Sigmoid colon (tissue), 7 donors: ENCODE measurements at regions of chr5 and their contacts with region 1.

Region 1: DNA sequence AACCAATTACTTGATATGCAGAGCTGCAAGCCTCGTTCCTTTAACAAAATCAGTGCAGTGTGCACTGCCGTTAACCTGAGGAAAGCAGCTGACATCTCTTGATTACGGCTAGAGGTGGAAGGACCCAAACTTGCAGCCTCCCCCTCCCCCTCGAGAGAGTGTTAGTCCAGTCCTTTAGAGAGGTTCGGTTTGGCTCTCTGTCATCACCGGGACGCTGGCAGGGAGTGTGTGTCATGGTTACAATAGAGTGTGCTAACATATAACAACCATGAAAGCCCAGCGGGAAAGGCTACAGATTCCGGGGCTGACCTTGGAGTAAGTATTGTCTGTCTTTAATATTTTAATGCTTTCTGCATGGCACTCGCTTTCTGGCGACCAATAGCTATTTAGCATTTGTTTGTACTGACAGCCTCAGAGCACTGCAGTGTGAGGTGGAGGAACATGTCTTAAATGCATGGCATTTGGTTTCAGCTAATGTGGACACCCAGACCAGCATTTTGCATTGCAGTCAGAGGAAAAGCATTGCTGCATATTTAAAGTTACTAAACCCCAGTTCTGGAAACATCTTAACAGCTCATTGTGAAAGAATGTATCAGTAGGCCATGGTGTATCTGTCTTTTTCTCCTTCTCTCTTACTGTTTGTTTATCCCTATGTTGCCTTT is 237.5 kb downstream of the CD180 start:
- DNase-seq: peak; percentile 69
- H3K4me3 ChIP-seq: peak overlapping the region; percentile 23 to 47 (median 46)
- H3K27ac ChIP-seq: peak overlapping the region; percentile 64 to 76 (median 72)
- H3K4me1 ChIP-seq: peaks cover 0 to 26% (median 19%) of the 10 kb centered on the region in 4 donors
- H3K27me3 ChIP-seq: no peaks in the 10 kb centered on the region
- CTCF ChIP-seq: no peak
- EP300 ChIP-seq: no peak
- POLR2A ChIP-seq: no peak

Region 2: GRCh38 chr5:66828548-66829357 is 130.4 kb before region 1 on chr5:
- intact Hi-C with region 1: loop called (anchors 5 kb)
- DNase-seq: peak; percentile 80
- H3K4me3 ChIP-seq: peak overlapping the region; percentile 21 to 51 (median 41)
- H3K27ac ChIP-seq: peak overlapping the region in 2 of 4 donors; percentile 22 to 58
- H3K4me1 ChIP-seq: peaks cover 0 to 15% (median 6%) of the 10 kb centered on the region in 4 donors
- H3K27me3 ChIP-seq: no peaks in the 10 kb centered on the region
- CTCF ChIP-seq: no peak
- EP300 ChIP-seq: no peak
- POLR2A ChIP-seq: no peak